ENCODE measurements at regions of chr5 and their contacts with region 1.

Region 1: DNA sequence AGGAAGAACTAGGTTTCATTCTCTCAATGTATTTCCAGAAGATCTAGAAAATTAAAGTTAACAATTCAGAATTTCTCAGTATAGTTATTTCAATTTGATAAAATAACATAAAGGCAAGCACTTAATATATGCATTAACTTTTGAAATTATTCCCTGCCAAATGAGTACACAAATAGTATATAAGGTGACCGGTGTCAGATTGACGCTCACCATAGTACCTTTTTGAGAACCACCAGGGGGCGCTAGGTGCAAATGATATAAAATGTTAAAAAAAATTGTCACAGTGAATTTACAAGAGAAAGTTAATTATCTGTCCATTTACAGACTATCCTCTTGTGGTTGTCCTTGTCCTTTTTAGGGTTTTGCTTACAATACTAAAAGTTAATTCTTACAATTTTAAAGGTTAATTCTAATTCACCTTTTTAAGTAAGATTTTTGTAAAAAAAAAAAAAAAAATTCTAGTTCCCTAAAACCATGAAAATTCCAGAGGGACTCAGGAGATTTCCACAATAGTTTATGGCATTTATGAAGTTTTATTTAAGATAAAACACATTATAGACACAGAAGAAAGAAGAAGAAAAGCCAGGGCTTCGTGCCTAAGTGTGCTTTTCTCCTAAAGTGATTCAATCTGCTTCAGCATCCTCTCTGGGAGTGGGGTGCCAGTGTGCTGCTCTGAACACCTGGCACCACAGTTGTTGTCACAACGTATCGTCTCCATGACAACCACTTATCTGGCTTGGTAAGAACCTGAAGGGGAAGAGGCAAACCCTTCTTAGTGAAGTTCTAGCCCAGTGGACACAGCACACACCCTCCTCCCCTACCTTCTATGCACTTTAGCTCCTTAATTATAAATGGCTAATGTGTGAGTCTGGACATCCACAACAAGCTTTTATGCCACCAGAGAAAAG is 1.7 kb downstream of the ADAMTS16 start:
- DNase-seq: peak; percentile 55
- ATAC-seq: peak; percentile 26; the same call in 1 of the 3 replicates
- H3K4me3 ChIP-seq: no peak overlapping the region
- H3K27ac ChIP-seq: no peak overlapping the region
- H3K4me1 ChIP-seq: peaks cover 13% of the 10 kb centered on the region
- H3K27me3 ChIP-seq: peaks cover 0 to 12% of the 10 kb centered on the region in 2 experiments; a peak in 3 of 5 replicates
- CTCF ChIP-seq: peak; percentile 57
- EP300 ChIP-seq: no peak
- POLR2A ChIP-seq: no peak
- RAD21 ChIP-seq: peak; percentile 55; the same call in 1 of the 2 replicates

Region 2: DNA sequence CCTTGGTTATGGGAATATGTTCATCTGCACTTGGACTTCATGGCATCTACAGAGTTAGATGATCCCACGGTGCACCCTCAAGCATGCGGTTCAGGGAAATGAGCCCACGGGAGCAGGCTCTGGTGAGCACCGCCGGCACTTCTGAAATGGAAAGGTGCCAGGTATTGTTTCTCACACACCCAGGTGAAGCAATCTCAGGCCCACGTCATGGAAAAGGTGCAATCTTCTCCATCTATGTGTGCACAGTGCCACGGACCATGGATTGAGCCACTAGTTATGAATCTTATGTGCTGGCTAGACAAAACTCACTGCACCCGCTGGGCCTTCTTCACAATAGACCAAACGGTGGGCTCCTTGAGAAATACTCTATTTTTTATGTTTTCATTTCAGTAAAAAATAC is 1518.9 kb before region 1 on chr5:
- CTCF ChIA-PET with region 1: no interaction called
- POLR2A ChIA-PET with region 1: no interaction called
- in situ Hi-C with region 1: no loop called
- intact Hi-C with region 1: no loop called
- DNase-seq: no peak
- ATAC-seq: no peak
- H3K4me3 ChIP-seq: no peak overlapping the region
- H3K27ac ChIP-seq: no peak overlapping the region
- H3K4me1 ChIP-seq: no peaks in the 10 kb centered on the region
- H3K27me3 ChIP-seq: peaks cover 0 to 4% of the 10 kb centered on the region in 2 experiments; a peak in 3 of 5 replicates
- CTCF ChIP-seq: no peak
- EP300 ChIP-seq: no peak
- POLR2A ChIP-seq: no peak
- RAD21 ChIP-seq: no peak

Region 3: GRCh38 chr5:4042311-4042710 is 1099.6 kb before region 1 on chr5:
- CTCF ChIA-PET with region 1: no interaction called
- POLR2A ChIA-PET with region 1: no interaction called
- in situ Hi-C with region 1: no loop called
- intact Hi-C with region 1: no loop called
- DNase-seq: no peak
- ATAC-seq: no peak
- H3K4me3 ChIP-seq: no peak overlapping the region
- H3K27ac ChIP-seq: no peak overlapping the region
- H3K4me1 ChIP-seq: no peaks in the 10 kb centered on the region
- H3K27me3 ChIP-seq: no peaks in the 10 kb centered on the region
- CTCF ChIP-seq: no peak
- EP300 ChIP-seq: no peak
- POLR2A ChIP-seq: no peak
- RAD21 ChIP-seq: no peak

Region 4: DNA sequence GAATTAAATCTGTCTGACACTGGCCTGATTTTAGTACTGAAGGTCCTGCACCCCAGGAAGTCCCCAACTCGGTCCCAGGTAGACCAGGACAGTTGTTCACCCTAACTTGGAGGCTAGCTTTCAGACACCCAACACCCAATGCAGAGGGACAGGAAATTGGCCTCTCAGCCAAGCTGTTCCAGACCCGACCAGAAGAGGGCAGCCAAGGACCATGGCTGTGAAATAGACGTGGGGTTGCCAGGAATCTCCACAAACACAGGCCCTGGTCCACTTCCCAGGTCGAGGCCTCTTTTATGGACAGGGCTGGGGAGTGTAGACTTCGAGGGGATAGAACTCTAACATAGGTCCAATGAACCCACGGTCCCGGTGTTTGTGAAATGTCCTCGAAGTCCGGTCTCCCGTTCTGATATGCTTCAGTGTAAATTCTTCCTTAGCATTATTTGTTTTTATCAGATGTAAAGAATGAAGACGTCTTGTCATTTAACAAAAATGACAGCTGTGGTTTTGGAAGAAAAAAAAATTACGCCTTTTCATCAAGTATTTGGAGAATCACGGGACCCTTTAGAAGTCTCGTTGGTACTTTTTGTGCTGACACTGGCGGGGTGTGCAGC is 262.1 kb before region 1 on chr5:
- CTCF ChIA-PET with region 1: no interaction called
- POLR2A ChIA-PET with region 1: no interaction called
- in situ Hi-C with region 1: loop called (anchors 10 kb)
- intact Hi-C with region 1: loop called (anchors 5 kb)
- DNase-seq: peak; percentile 44
- ATAC-seq: peak; percentile 95
- H3K4me3 ChIP-seq: no peak overlapping the region
- H3K27ac ChIP-seq: no peak overlapping the region
- H3K4me1 ChIP-seq: no peaks in the 10 kb centered on the region
- H3K27me3 ChIP-seq: peaks cover 3 to 19% of the 10 kb centered on the region in 2 experiments; a peak in 3 of 5 replicates
- CTCF ChIP-seq: peak; percentile 94
- EP300 ChIP-seq: no peak
- POLR2A ChIP-seq: no peak
- RAD21 ChIP-seq: peak; percentile 81

Region 5: GRCh38 chr5:5340206-5340729 is 198.4 kb after region 1 on chr5:
- CTCF ChIA-PET with region 1: no interaction called
- POLR2A ChIA-PET with region 1: no interaction called
- in situ Hi-C with region 1: no loop called
- intact Hi-C with region 1: loop called (anchors 2 kb)
- DNase-seq: peak; percentile 73
- ATAC-seq: peak; percentile 94
- H3K4me3 ChIP-seq: no peak overlapping the region
- H3K27ac ChIP-seq: no peak overlapping the region
- H3K4me1 ChIP-seq: peaks cover 23% of the 10 kb centered on the region
- H3K27me3 ChIP-seq: no peaks in the 10 kb centered on the region
- CTCF ChIP-seq: peak; percentile 65
- EP300 ChIP-seq: no peak
- POLR2A ChIP-seq: no peak
- RAD21 ChIP-seq: peak; percentile 54; the same call in 1 of the 2 replicates

Region 6: DNA sequence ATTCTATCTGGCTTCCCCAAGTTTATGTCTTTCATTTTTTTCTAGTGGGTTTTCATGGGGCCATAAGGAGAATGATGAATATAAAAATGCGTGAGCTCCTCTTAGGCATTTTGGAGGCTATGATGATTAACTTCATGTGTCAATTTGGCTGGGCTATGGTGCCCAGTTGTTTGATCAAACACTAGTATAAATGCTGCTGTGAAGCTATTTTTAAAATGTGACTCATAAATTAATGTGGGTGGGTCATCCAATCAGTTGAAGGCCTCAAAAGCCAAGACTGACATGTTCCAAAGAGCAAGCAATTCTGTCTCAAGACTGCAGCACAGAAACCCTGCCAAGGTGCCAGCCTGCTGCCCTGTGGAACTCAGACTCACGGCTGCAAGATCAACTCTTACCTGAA is 256.2 kb after region 1 on chr5:
- CTCF ChIA-PET with region 1: interaction called, 17 read pairs
- POLR2A ChIA-PET with region 1: no interaction called
- in situ Hi-C with region 1: loop called (anchors 25 kb)
- intact Hi-C with region 1: no loop called
- DNase-seq: no peak
- ATAC-seq: no peak
- H3K4me3 ChIP-seq: no peak overlapping the region
- H3K27ac ChIP-seq: no peak overlapping the region
- H3K4me1 ChIP-seq: no peaks in the 10 kb centered on the region
- H3K27me3 ChIP-seq: no peaks in the 10 kb centered on the region
- CTCF ChIP-seq: no peak
- EP300 ChIP-seq: no peak
- POLR2A ChIP-seq: no peak
- RAD21 ChIP-seq: no peak

Region 7: GRCh38 chr5:5421961-5422818 is 280.3 kb after region 1 on chr5 and contains the start of gene ICE1:
- CTCF ChIA-PET with region 1: interaction called, 22 read pairs
- POLR2A ChIA-PET with region 1: no interaction called
- in situ Hi-C with region 1: loop called (anchors 25 kb)
- intact Hi-C with region 1: loop called (anchors 1 kb)
- DNase-seq: peak; percentile 97
- ATAC-seq: peak; percentile 98
- H3K4me3 ChIP-seq: peak within 1 kb of the TSS; percentile 86 to 94 (median 91)
- H3K27ac ChIP-seq: peak within 1 kb of the TSS; percentile 96
- H3K4me1 ChIP-seq: peaks cover 71% of the 10 kb centered on the region
- H3K27me3 ChIP-seq: no peaks in the 10 kb centered on the region
- CTCF ChIP-seq: peak; percentile 36
- EP300 ChIP-seq: no peak; a peak in 1 of 4 replicates
- POLR2A ChIP-seq: peak; percentile 77 to 82
- RAD21 ChIP-seq: no peak
- total RNA-seq, gene ICE1: 27.6 and 35.2 TPM in 2 replicates